Psoas muscle (tissue), 8 donors: ENCODE measurements at regions of chr6 and their contacts with region 1.

Region 1: DNA sequence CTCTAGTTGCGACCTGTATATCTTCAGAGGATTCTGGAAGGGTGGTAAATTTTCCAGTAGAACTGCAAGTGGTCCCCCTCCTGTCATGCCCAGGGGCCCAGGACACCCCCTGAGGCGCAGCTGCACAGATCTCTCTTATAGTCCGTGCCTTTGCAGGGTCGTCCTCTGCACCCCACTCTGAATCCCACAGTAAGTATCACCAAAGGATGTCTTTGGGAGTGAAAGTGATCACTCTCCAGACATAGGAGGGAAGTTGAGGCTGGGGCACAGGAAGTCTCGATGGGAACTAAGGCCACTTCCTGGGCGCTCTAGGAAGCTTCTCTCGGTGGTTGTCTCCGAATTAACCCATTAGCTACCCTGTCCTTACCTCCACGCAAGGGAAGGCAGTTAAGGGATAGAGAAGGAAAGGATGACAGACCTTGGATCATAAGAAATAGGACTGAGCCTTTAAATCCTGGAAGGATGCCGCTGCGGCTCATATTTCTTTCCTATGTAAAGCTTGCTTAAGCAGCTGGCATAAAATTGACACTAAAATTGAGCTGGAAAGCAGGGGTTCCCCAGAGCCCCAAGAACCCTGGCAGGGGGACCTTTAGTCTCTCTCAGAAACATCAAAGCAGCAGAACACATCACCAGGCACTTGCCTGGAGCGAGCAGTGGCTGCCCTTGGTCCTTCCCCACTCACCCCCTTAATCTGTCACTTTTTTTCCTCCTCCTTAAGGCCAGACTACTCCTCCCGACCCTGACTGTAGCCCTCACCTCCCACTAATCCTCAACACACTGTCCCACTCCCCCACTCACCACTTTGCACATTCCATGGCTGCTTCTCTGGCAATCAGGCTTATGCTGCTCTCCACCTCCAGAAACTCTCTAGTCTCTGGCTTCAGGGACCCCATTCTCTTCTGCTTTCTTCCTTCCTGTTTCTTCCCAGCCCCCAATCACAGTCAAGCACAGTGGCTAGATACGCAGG is at the start of gene ZKSCAN4:
- DNase-seq: peak; percentile 77 to 84
- ATAC-seq: peak; percentile 85 to 100 (median 98)
- H3K4me3 ChIP-seq: peak within 1 kb of the TSS; percentile 80
- H3K27ac ChIP-seq: peak within 1 kb of the TSS; percentile 61
- H3K4me1 ChIP-seq: peaks cover 7% of the 10 kb centered on the region
- H3K27me3 ChIP-seq: no peaks in the 10 kb centered on the region
- CTCF ChIP-seq: no peak
- total RNA-seq, gene ZKSCAN4: 1.0 to 2.2 (median 1.8) TPM

Region 2: GRCh38 chr6:28218271-28219248 is 33.7 kb before region 1 on chr6:
- intact Hi-C with region 1: loop called in 1 of 2 experiments (anchors 5 kb)
- DNase-seq: peak; percentile 86 to 87
- ATAC-seq: peak; percentile 94 to 98 (median 95)
- H3K4me3 ChIP-seq: peak overlapping the region; percentile 83
- H3K27ac ChIP-seq: peak overlapping the region; percentile 90
- H3K4me1 ChIP-seq: peaks cover 19% of the 10 kb centered on the region
- H3K27me3 ChIP-seq: peaks cover 0 to 29% (median 6%) of the 10 kb centered on the region in 3 donors
- CTCF ChIP-seq: no peak

Region 3: DNA sequence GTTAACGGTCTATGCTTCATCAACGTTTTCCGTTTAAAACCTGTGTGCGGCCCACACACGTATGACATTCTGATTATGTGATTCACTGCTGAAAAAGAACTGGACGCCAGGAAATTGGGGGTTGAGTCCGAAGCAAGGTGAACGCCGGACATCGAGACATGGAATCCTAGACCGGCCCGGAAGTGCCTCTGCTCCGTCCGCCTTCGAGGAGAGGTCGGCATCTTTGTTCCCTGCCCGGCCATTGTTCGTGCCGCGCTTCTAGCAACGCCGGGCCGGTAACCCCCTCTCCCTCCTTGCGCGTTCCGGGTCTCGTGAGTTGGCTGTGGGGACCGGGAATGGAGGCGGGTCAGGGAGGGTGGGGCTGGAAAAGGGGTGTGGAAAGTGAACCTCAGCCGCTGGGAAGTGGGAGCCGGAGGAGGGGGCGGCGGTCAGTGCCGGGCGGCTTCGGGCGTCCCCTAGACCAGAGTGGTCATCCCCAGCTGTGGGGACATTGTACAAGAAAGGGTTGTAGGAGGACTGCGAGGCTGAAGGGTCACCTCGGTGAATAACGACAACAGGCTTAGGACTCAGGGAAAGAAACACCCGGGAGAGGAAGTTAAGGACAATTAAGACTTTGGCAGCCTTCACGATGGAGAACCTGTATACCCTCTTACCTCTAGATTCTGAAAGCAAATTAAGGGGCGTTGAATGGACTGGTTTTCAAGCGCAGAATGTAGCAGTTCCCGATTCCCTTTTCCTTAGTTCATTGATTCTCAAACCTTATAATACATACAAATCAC is 27.0 kb before region 1 on chr6 and contains the start of gene ZSCAN9:
- intact Hi-C with region 1: loop called in 1 of 2 experiments (anchors 2 kb)
- DNase-seq: peak; percentile 88 to 93
- ATAC-seq: peak; percentile 95 to 99 (median 98)
- H3K4me3 ChIP-seq: peak within 1 kb of the TSS; percentile 84
- H3K27ac ChIP-seq: peak within 1 kb of the TSS; percentile 62
- H3K4me1 ChIP-seq: peaks cover 10% of the 10 kb centered on the region
- H3K27me3 ChIP-seq: peaks cover 0 to 9% (median 1%) of the 10 kb centered on the region in 3 donors
- CTCF ChIP-seq: no peak
- total RNA-seq, gene ZSCAN9: 5.2 to 6.9 (median 6.3) TPM

Region 4: DNA sequence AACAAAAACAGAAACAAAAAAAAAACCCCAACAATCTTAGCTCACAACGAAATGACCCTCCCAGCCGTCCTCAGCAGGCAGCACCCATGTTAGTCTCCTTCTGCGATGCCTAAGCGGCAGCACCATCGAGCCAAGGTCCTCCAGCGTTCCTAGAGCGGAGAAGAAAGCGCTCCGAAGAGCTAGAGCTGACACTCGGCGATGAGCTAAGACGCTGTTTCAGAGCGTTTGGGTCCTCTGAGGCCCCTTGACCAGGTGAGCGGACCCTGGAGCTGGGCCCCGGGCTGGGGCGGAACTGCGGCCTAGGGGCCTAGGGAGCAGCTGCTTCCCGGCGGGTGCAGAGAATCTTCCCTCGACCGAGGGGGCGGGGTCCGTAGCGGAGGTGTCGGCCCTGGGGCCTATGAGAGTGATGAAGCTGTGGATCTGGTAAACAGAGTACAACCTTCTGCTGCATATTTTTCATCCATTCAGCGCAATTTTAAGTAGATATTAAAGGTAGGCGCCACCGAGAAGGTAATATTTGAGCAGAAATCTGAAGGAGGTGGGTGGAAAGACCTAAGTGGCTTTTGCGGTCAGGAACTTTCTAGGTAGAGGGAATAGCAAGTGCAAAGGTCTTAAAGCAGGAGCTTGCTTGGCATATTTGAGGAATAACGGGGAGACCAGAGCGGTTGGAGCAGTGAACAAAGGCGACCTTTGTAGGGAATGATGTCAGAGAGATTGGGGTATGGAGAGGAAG is 14.8 kb after region 1 on chr6 and contains the start of gene ZSCAN26:
- intact Hi-C with region 1: loop called in 1 of 2 experiments (anchors 2 kb)
- DNase-seq: peak; percentile 88 to 93
- ATAC-seq: peak; percentile 95 to 99 (median 97)
- H3K4me3 ChIP-seq: peak within 1 kb of the TSS; percentile 77
- H3K27ac ChIP-seq: peak within 1 kb of the TSS; percentile 78
- H3K4me1 ChIP-seq: peaks cover 27% of the 10 kb centered on the region
- H3K27me3 ChIP-seq: no peaks in the 10 kb centered on the region
- CTCF ChIP-seq: no peak
- total RNA-seq, gene ZSCAN26: 6.9 to 12.9 (median 10.1) TPM